GM12878 (cell line): ENCODE measurements at regions of chr14 and their contacts with region 1.

Region 1: GRCh38 chr14:25406818-25407217 is 356.9 kb upstream of the STXBP6 start:
- DNase-seq: no peak
- ATAC-seq: peak; percentile 77
- H3K4me3 ChIP-seq: no peak overlapping the region
- H3K27ac ChIP-seq: no peak overlapping the region
- H3K4me1 ChIP-seq: no peaks in the 10 kb centered on the region
- H3K27me3 ChIP-seq: no peaks in the 10 kb centered on the region
- CTCF ChIP-seq: peak; percentile 40 to 43 (median 40); a peak in 4 of 6 replicates
- EP300 ChIP-seq: no peak
- POLR2A ChIP-seq: no peak
- RAD21 ChIP-seq: peak; percentile 21; the same call in 1 of the 2 replicates

Region 2: DNA sequence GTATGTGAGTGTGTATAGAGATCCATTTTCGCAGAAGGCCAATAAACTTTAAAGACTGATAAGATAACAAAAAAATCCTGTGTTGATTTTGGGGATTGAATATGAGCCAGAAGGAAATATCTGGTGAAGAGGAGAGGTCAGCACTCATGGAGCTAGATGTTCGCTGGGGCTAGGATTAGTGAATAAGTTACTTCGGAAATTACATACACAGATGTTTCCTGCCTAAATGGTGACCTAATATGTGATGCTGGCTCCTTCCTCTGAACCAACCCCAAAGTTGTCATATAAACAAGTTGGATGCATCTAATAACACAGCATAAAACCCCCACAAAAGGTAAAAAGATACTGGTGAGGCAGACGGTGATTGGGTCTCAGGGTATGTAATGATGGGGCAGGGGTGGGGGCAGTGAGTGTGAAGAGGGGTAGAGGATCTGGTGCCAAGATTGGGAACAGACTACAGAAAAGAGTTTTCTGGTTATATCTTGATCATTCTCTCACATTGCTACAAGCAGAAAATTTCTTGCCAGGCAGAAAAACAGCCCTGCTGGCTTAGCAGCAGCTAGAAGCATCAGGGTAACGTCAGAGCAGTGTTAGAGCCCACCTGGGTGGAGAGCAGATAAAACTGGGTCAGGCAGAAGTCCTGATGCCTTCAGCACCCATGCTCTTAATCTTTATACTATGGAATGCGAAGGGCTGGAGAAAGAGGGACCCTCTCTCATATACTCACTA is 632.5 kb before region 1 on chr14:
- CTCF ChIA-PET with region 1: no interaction called
- POLR2A ChIA-PET with region 1: no interaction called
- RAD21 ChIA-PET with region 1: no interaction called
- SMC1A ChIA-PET with region 1: no interaction called
- in situ Hi-C with region 1: no loop called
- intact Hi-C with region 1: no loop called
- DNase-seq: no peak
- ATAC-seq: no peak
- H3K4me3 ChIP-seq: no peak overlapping the region
- H3K27ac ChIP-seq: no peak overlapping the region
- H3K4me1 ChIP-seq: no peaks in the 10 kb centered on the region
- H3K27me3 ChIP-seq: no peaks in the 10 kb centered on the region
- CTCF ChIP-seq: no peak
- EP300 ChIP-seq: no peak
- POLR2A ChIP-seq: no peak
- RAD21 ChIP-seq: no peak

Region 3: GRCh38 chr14:25250516-25250915 is 156.3 kb before region 1 on chr14:
- CTCF ChIA-PET with region 1: no interaction called
- POLR2A ChIA-PET with region 1: no interaction called
- RAD21 ChIA-PET with region 1: no interaction called
- SMC1A ChIA-PET with region 1: no interaction called
- in situ Hi-C with region 1: no loop called
- intact Hi-C with region 1: loop called (anchors 5 kb)
- DNase-seq: no peak
- ATAC-seq: no peak
- H3K4me3 ChIP-seq: no peak overlapping the region
- H3K27ac ChIP-seq: no peak overlapping the region
- H3K4me1 ChIP-seq: no peaks in the 10 kb centered on the region
- H3K27me3 ChIP-seq: no peaks in the 10 kb centered on the region
- CTCF ChIP-seq: no peak
- EP300 ChIP-seq: no peak
- POLR2A ChIP-seq: no peak
- RAD21 ChIP-seq: no peak

Region 4: GRCh38 chr14:25484235-25484634 is 77.4 kb after region 1 on chr14:
- CTCF ChIA-PET with region 1: no interaction called
- POLR2A ChIA-PET with region 1: no interaction called
- RAD21 ChIA-PET with region 1: no interaction called
- SMC1A ChIA-PET with region 1: no interaction called
- in situ Hi-C with region 1: no loop called
- intact Hi-C with region 1: no loop called
- DNase-seq: no peak
- ATAC-seq: no peak
- H3K4me3 ChIP-seq: no peak overlapping the region
- H3K27ac ChIP-seq: no peak overlapping the region
- H3K4me1 ChIP-seq: no peaks in the 10 kb centered on the region
- H3K27me3 ChIP-seq: no peaks in the 10 kb centered on the region
- CTCF ChIP-seq: no peak
- EP300 ChIP-seq: no peak
- POLR2A ChIP-seq: no peak
- RAD21 ChIP-seq: no peak